PC-9 (cell line): ENCODE measurements at regions of chr12 and their contacts with region 1.

Region 1: GRCh38 chr12:48851883-48852733 is at the start of gene DDX23:
- DNase-seq: peak; percentile 92 to 93
- H3K4me3 ChIP-seq: peak within 1 kb of the TSS; percentile 68
- H3K27ac ChIP-seq: peak within 1 kb of the TSS; percentile 45
- H3K4me1 ChIP-seq: peaks cover 19% of the 10 kb centered on the region
- H3K27me3 ChIP-seq: no peaks in the 10 kb centered on the region
- CTCF ChIP-seq: no peak
- total RNA-seq, gene DDX23: 91.4 and 108 TPM in 2 replicates

Region 2: DNA sequence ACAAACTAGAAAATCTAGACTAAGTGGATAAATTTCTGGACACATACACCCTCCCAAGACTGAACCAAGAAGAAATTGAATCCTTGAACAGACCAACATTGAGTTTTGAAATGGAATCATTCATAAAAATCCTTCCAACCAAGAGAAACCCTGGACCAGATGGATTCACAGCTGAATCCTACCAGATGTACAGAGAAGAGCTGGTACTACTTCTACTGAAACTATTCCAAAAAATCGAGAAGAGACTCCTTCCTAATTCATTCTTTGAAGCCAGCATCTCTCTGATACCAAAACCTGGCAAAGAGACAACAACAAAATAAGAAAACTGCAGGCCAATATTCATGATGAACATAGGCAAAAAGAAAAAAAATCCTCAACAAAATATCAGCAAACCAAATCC is 1373.7 kb before region 1 on chr12:
- CTCF ChIA-PET with region 1: no interaction called
- POLR2A ChIA-PET with region 1: no interaction called
- intact Hi-C with region 1: no loop called
- DNase-seq: no peak
- H3K4me3 ChIP-seq: no peak overlapping the region
- H3K27ac ChIP-seq: no peak overlapping the region
- H3K4me1 ChIP-seq: no peaks in the 10 kb centered on the region
- H3K27me3 ChIP-seq: peaks cover 18% of the 10 kb centered on the region; the same call in 1 of the 2 replicates
- CTCF ChIP-seq: no peak

Region 3: DNA sequence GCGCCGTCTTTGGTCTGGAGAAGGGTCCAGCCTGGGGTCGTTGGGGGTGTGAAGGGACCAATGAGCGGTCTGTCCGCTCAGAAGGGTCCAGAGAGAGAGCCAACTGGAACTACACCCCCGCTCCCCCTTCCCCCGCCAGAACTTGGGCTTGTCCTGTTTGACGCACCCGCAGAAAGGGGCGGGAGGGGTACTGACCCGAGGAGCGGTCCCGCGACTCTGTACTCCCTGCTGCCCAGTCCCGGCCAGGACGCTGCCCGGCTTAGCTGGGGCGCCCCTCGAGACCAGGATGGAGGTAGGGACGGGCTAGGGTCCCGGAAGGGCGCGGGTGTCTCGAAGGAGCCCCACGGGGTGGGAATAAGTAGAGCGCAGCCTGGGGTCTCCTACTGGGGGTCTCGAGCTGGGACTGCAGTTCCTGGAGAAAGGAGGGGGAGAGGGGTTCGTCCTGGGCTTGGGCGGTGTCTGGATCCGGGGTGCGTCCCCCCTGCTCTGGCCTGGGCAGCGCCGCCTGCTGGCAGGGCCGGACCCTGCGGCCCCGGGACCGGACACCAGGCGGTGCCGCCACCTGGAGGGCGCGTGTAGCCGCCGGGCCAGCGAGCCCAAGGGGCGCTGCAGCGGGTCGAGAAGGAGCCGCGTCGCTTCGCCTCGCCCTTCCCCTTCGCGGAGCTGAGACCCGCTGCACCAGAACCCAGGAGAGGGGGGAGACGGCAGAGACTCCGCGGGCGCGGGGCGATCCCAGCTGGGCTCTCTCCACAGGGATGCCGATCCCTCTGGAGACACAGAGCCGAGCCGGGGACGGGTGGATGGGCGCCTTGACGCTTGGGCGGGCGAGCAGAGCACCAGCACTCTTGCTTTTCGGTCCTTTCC is 37.6 kb before region 1 on chr12:
- CTCF ChIA-PET with region 1: no interaction called
- POLR2A ChIA-PET with region 1: no interaction called
- intact Hi-C with region 1: loop called (anchors 5 kb)
- DNase-seq: peak; percentile 46 to 88
- H3K4me3 ChIP-seq: peak overlapping the region; percentile 72
- H3K27ac ChIP-seq: 0 out of 2 replicates have a peak overlapping the region, but pooled peaks have one; percentile 2
- H3K4me1 ChIP-seq: peaks cover 19% of the 10 kb centered on the region
- H3K27me3 ChIP-seq: no peaks in the 10 kb centered on the region
- CTCF ChIP-seq: peak; percentile 89

Region 4: DNA sequence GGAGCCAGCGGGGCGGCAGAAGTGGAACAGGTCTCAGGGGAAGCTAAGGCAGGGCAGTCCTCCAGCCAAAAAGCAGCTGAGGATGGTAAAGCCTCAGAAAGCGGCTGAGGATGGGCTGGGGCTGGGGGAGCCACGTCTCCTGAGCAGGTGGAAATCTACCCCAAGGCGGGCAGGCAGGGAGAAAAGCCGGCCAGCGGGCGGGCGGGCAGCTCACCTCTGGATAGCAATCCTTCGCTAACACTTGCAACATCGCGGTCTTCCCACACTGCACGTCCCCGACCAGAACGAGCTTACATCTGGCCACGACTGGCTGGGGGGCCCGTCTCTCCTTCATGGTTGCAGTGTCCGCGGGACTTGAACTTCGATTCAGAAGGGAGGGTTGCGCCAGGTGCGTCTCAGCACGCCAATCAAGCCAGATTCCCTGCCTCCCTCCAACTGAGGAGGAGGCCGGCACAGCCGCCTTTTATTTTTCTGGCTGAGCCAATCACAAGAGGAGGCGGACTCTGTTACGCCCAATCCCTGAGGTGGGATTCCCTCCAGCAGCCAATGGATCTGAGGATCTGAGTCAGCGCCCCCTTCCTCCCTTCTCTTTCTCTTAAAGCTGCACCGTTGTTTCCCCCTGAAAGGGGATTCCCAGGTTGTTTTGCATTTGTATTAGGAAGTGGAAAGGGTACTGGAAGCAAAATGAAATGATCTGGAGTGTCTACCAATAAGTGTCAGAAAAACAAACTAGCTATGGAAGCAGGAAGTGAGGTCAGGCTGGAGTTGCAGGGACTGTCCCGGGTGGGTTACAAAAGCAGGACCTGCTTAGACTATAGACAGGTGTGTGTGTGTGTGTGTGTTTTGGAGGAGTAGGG is 13.6 kb after region 1 on chr12 and contains the start of gene RND1:
- CTCF ChIA-PET with region 1: interaction called, 10 read pairs
- POLR2A ChIA-PET with region 1: interaction called, 4 read pairs
- intact Hi-C with region 1: no loop called
- DNase-seq: peak; percentile 83 to 87
- H3K4me3 ChIP-seq: peak within 1 kb of the TSS; percentile 56
- H3K27ac ChIP-seq: 0 out of 2 replicates have a peak within 1 kb of the TSS, but pooled peaks have one; percentile 36
- H3K4me1 ChIP-seq: peaks cover 20% of the 10 kb centered on the region
- H3K27me3 ChIP-seq: 0 out of 2 replicates have a peak, but pooled peaks cover 4% of the 10 kb centered on the region
- CTCF ChIP-seq: no peak
- total RNA-seq, gene RND1: 2.7 and 4.0 TPM in 2 replicates

Region 5: GRCh38 chr12:48890657-48891418 is 38.7 kb after region 1 on chr12:
- CTCF ChIA-PET with region 1: interaction called, 19 read pairs
- POLR2A ChIA-PET with region 1: interaction called, 21 read pairs
- intact Hi-C with region 1: loop called (anchors 1 kb)
- DNase-seq: peak; percentile 41 to 78
- H3K4me3 ChIP-seq: no peak overlapping the region
- H3K27ac ChIP-seq: no peak overlapping the region
- H3K4me1 ChIP-seq: no peaks in the 10 kb centered on the region
- H3K27me3 ChIP-seq: peaks cover 7% of the 10 kb centered on the region; the same call in 1 of the 2 replicates
- CTCF ChIP-seq: peak; percentile 90

Region 6: DNA sequence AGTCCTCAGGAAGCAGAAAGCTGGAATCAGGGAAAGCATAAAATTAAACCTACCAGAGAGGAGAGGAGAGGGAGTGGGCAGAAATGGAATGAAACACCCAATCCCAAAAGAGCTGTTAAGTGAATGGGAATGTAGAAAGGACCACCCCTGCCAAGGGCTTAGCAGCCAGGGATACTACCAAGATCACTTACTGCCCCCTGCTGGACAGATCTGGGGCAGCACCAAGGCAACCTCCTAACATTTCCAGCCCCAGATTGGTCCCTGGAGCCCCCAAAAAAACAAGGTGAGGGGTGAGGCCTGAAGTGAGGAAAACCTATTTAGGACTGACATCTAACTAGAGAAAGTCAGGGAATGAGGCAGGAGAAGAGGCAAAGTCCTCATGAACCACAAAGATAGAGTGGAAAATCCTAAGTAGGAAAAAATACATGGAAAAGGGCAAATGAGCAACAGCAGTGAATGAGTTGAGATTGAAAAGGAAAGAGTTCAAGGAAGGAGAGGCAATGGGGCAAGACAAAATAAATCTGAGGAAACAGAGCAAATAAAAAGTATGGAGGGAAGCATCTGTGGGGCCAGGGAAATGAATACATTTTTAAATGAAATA is 84.4 kb after region 1 on chr12:
- CTCF ChIA-PET with region 1: interaction called, 4 read pairs
- POLR2A ChIA-PET with region 1: no interaction called
- intact Hi-C with region 1: loop called (anchors 1 kb)
- DNase-seq: peak in 1 of 2 experiments; percentile 62
- H3K4me3 ChIP-seq: no peak overlapping the region
- H3K27ac ChIP-seq: no peak overlapping the region
- H3K4me1 ChIP-seq: no peaks in the 10 kb centered on the region
- H3K27me3 ChIP-seq: no peaks in the 10 kb centered on the region
- CTCF ChIP-seq: peak; percentile 94

Region 7: DNA sequence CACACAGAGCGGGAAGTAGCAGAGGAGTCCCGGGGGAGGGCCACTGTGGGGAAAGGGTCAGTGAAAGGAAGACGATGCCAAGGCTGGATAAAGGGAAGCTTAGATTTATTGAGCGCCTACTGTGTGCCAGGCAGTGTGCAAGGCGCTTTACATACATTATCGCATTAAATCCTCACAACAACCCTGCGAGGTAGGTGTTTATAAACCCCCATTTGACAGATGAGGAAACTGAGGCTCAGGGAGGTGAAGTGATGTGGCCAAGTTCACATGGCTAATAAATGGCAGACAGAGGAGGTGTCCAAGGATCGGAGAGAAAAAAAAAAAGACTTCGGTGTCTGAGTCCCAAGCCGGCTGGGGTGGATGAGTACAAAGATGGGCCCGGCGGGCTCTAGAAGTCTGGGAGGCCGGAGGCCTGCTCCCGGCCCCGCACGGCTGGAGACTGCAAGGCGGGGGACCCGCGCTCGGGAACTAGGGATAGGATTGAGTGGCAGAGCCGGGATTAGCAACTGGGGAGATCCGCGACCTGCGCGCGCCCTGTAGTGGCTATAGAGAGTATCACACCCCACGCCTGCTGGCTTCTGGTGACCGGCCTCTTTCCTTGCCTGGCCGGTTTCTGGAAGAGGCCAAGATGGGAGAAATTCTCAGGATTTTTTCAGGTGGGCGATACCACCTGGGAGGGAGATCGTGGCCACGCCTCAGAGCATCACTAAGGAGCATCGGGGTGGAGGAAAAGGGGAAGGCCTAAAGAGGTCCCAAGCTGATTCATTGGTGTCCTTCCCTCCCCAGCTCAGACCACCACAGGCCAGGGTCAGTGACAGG is 143.2 kb after region 1 on chr12:
- CTCF ChIA-PET with region 1: interaction called, 5 read pairs
- POLR2A ChIA-PET with region 1: no interaction called
- intact Hi-C with region 1: loop called (anchors 1 kb)
- DNase-seq: peak; percentile 64 to 86
- H3K4me3 ChIP-seq: peak overlapping the region; percentile 27; the same call in 1 of the 2 replicates
- H3K27ac ChIP-seq: no peak overlapping the region
- H3K4me1 ChIP-seq: peaks cover 22% of the 10 kb centered on the region
- H3K27me3 ChIP-seq: no peaks in the 10 kb centered on the region
- CTCF ChIP-seq: peak; percentile 82